Activated T-helper 1 cell treated with anti-CD3 and anti-CD28 coated beads, Interleukin-12 subunit alpha, Interleukin-12 subunit beta, Interleukin-2, Interleukin-4 antibody, amounts not matched to agents 30 ng/mL and 10 ng/mL and 1 ng/mL, durations not matched to agents 14 hours and 24 hours and 36 hours (primary cell): ENCODE measurements at regions of chr2 and their contacts with region 1.

Region 1: DNA sequence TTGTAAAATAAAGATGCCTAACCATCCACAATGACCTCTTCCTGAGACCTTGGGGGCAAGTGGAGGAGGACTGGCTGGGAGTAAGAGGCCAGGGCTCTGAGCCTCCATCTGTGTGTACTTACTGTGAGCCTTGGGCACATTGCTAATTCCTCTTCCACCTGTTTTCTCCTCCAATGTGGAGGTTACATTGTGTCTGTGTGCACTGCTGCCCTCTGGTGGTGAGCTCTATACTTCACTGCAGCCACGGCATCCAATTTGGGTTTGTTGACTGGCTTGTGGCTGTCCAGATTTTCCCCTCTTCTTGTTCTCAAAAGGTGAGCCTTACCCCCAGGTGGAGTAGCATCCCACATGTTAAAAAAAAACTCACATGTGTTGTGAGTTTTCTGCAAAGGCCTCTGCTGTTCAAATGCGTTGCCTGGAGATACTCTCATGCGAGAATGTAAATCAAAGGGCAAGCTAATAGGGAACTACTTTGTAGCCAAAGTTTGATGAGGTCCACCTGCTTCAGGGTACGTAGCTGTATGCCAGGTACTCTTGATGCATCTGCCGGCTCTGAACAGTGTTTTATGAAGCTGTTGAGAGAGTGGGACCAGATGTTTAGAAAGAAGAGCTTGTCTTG is 80.8 kb downstream of the APOB start:
- DNase-seq: peak; percentile 34
- H3K4me3 Mint-ChIP-seq: no peak overlapping the region
- H3K27ac Mint-ChIP-seq: no peak overlapping the region
- H3K4me1 Mint-ChIP-seq: no peaks in the 10 kb centered on the region
- H3K27me3 Mint-ChIP-seq: peaks cover 9% of the 10 kb centered on the region

Region 2: GRCh38 chr2:20682167-20682920 is 280.7 kb before region 1 on chr2:
- intact Hi-C with region 1: loop called (anchors 1 kb)
- DNase-seq: no peak
- H3K4me3 Mint-ChIP-seq: no peak overlapping the region
- H3K27ac Mint-ChIP-seq: no peak overlapping the region
- H3K4me1 Mint-ChIP-seq: no peaks in the 10 kb centered on the region
- H3K27me3 Mint-ChIP-seq: no peaks in the 10 kb centered on the region

Region 3: DNA sequence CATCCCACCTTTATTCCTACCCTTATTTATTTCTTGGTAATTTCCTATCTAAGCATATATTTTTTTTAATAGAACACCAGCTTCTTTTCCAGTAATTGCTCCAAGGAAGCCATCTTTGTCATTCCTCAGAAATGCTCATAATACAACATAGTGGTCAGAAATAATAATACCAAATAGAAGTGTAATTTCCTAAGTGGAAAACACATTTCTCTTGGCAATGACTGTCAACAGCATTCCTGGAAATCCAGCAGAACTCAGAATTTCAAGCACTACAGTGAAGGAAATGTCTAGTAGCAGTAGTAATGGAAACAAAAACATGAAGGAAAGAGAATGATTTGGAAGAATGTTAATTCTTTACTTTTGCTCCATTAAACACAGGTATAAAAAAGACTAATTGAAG is 239.5 kb before region 1 on chr2:
- intact Hi-C with region 1: loop called (anchors 2 kb)
- DNase-seq: no peak
- H3K4me3 Mint-ChIP-seq: no peak overlapping the region
- H3K27ac Mint-ChIP-seq: no peak overlapping the region
- H3K4me1 Mint-ChIP-seq: no peaks in the 10 kb centered on the region
- H3K27me3 Mint-ChIP-seq: no peaks in the 10 kb centered on the region

Region 4: GRCh38 chr2:20781656-20782265 is 181.3 kb before region 1 on chr2:
- intact Hi-C with region 1: loop called (anchors 1 kb)
- DNase-seq: no peak
- H3K4me3 Mint-ChIP-seq: no peak overlapping the region
- H3K27ac Mint-ChIP-seq: no peak overlapping the region
- H3K4me1 Mint-ChIP-seq: peaks cover 6% of the 10 kb centered on the region
- H3K27me3 Mint-ChIP-seq: no peaks in the 10 kb centered on the region